ENCODE measurements at regions of chr11 and their contacts with region 1.

Region 1: DNA sequence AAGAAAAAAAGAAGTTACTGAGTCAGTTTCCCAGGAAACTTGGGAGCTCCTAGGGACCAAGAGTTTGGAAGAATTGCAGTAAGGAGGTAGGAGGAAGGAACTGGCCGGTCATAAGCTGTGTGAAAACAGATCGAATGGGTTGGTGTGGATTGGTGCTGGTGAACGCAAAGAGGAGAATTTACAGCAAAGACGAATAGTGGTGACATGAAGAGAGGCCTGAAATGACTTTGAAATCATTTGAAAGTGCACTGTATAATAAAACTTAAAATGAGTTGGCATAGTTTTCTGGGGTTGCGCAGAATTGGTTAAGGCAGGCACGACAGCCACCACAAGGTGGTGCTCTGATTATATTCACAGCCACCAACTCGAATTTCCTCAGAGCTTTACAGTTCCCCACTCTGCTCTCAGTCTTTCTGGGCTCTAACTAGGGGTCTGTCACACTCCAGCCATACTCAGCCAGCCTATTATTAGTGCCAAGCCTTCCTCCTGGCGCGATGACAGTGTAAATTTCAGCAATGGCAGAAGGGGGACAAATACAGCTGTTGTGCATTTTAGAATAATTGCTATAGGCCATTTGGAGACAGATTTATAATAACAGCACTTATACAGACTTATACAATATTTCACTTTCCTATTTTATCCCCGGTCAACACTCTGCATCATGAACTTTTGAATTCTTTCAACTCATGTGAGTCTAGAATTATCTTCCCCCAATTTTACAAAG is 8.3 kb upstream of the HTR3B start:
- DNase-seq: peak; percentile 30
- H3K4me3 ChIP-seq: no peak overlapping the region
- H3K27ac ChIP-seq: no peak overlapping the region
- H3K4me1 ChIP-seq: no peaks in the 10 kb centered on the region
- H3K27me3 ChIP-seq: no peaks in the 10 kb centered on the region
- CTCF ChIP-seq: peak; percentile 69

Region 2: GRCh38 chr11:113764527-113765219 is 131.6 kb before region 1 on chr11:
- intact Hi-C with region 1: no loop called
- DNase-seq: no peak
- H3K4me3 ChIP-seq: no peak overlapping the region
- H3K27ac ChIP-seq: no peak overlapping the region
- H3K4me1 ChIP-seq: no peaks in the 10 kb centered on the region
- H3K27me3 ChIP-seq: no peaks in the 10 kb centered on the region
- CTCF ChIP-seq: no peak

Region 3: GRCh38 chr11:113994077-113994954 is 98.0 kb after region 1 on chr11:
- intact Hi-C with region 1: loop called (anchors 10 kb)
- DNase-seq: no peak
- H3K4me3 ChIP-seq: no peak overlapping the region
- H3K27ac ChIP-seq: no peak overlapping the region
- H3K4me1 ChIP-seq: no peaks in the 10 kb centered on the region
- H3K27me3 ChIP-seq: no peaks in the 10 kb centered on the region
- CTCF ChIP-seq: peak; percentile 55